ENCODE measurements at regions of chr13 and their contacts with region 1.

Region 1: GRCh38 chr13:94435604-94436226 is 43.8 kb downstream of the DCT start:
- DNase-seq: peak in 1 of 2 donors; percentile 66
- ATAC-seq: peak in 2 of 3 donors; percentile 52 to 57
- H3K4me3 ChIP-seq: no peak overlapping the region
- H3K4me3 Mint-ChIP-seq: no peak overlapping the region
- H3K27ac ChIP-seq: no peak overlapping the region
- H3K27ac Mint-ChIP-seq: no peak overlapping the region
- H3K4me1 ChIP-seq: no peaks in the 10 kb centered on the region
- H3K4me1 Mint-ChIP-seq: no peaks in the 10 kb centered on the region
- H3K27me3 ChIP-seq: no peaks in the 10 kb centered on the region
- H3K27me3 Mint-ChIP-seq: peaks cover 0 to 10% of the 10 kb centered on the region in 2 donors
- CTCF ChIP-seq: peak; percentile 56

Region 2: DNA sequence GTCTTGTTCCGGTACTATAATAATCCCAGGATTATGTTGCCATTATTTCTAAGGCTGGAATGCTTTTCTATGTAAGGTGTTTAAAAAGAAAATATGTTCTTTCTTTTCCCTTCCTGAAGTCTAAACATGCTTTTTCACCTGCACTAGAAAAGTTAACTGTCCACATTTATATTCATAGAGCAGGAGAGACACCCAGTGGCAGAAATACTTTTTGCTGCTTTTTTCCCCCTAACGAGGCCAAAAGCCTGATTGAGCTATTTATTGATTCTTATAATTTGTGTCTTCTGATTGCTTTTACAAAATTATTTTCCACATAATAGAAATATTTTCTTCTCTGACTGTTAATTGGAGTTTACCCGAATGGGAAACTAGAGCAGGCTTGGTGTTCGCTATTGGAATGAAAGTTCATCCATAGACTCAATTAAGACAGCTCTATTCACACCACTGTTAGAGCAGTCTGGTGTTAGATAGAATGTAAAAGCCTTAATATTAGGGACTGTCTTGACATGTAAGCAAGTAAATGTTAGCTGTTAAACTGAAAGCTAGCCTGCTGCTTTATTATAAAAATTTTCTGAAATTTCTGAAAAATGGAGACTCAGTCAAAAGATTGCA is 181.8 kb after region 1 on chr13:
- intact Hi-C with region 1: loop called (anchors 1 kb)
- DNase-seq: peak in 1 of 2 donors; percentile 73
- ATAC-seq: peak in 2 of 3 donors; percentile 50 to 57
- H3K4me3 ChIP-seq: no peak overlapping the region
- H3K4me3 Mint-ChIP-seq: no peak overlapping the region
- H3K27ac ChIP-seq: no peak overlapping the region
- H3K27ac Mint-ChIP-seq: no peak overlapping the region
- H3K4me1 ChIP-seq: no peaks in the 10 kb centered on the region
- H3K4me1 Mint-ChIP-seq: peaks cover 0 to 5% of the 10 kb centered on the region in 2 donors
- H3K27me3 ChIP-seq: no peaks in the 10 kb centered on the region
- H3K27me3 Mint-ChIP-seq: no peaks in the 10 kb centered on the region
- CTCF ChIP-seq: peak; percentile 63

Measured in natural killer cell (primary cell).